ENCODE measurements at regions of chr5 and their contacts with region 1.

Region 1: DNA sequence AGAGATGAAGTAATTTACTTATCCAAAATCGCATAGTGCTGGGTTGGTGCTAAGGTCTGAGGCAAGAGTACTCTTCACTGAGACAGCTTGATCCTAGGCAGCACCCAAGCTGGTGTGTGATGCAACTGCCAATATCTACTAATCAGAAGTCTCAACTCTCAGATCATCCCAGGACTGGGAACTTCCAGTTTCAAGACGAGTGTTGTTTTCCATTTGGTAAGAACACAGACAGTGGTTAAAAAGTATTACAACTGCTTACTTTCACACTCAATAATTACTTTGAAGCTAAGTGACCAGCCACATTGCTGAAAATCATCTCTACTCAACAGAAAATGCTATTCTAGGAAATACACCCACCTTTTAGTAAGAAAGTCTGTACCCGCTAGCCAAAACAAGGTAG is 45.3 kb downstream of the FBXW11 start:
- DNase-seq: peak; percentile 65
- H3K4me3 Mint-ChIP-seq: no peak overlapping the region
- H3K27ac Mint-ChIP-seq: peak overlapping the region; percentile 57
- H3K4me1 Mint-ChIP-seq: peaks cover 89% of the 10 kb centered on the region
- H3K27me3 Mint-ChIP-seq: no peaks in the 10 kb centered on the region

Region 2: DNA sequence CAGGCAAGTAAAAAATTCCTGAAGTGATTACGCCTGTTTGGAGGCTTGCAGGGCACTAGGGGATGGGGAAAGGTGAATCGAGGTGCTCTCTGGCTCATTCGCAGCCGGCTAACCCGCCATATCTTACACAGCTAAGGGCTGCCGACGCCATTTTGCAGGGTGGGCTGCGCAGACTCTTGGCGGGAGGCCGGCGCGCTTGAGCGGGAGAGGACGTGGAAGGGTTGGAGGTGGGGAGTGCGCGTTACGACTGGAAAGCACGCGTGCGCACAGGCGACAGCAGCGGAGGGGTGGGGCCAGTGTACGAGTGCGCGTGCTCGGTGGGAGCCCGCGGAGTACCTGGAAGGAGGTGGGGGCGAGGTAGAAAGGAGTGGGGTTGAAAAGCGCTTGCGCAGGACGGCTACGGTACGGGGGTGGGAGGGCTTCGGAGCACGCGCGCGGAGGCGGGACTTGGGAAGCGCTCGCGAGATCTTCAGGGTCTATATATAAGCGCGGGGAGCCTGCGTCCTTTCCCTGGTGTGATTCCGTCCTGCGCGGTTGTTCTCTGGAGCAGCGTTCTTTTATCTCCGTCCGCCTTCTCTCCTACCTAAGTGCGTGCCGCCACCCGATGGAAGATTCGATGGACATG is 573.7 kb before region 1 on chr5 and contains the start of gene NPM1:
- CTCF ChIA-PET with region 1: no interaction called
- intact Hi-C with region 1: loop called (anchors 5 kb)
- DNase-seq: peak; percentile 98
- H3K4me3 Mint-ChIP-seq: peak within 1 kb of the TSS; percentile 98
- H3K27ac Mint-ChIP-seq: peak within 1 kb of the TSS; percentile 98
- H3K4me1 Mint-ChIP-seq: peaks cover 37% of the 10 kb centered on the region
- H3K27me3 Mint-ChIP-seq: no peaks in the 10 kb centered on the region
- total RNA-seq, gene NPM1: 3,194 to 3,467 TPM

Region 3: DNA sequence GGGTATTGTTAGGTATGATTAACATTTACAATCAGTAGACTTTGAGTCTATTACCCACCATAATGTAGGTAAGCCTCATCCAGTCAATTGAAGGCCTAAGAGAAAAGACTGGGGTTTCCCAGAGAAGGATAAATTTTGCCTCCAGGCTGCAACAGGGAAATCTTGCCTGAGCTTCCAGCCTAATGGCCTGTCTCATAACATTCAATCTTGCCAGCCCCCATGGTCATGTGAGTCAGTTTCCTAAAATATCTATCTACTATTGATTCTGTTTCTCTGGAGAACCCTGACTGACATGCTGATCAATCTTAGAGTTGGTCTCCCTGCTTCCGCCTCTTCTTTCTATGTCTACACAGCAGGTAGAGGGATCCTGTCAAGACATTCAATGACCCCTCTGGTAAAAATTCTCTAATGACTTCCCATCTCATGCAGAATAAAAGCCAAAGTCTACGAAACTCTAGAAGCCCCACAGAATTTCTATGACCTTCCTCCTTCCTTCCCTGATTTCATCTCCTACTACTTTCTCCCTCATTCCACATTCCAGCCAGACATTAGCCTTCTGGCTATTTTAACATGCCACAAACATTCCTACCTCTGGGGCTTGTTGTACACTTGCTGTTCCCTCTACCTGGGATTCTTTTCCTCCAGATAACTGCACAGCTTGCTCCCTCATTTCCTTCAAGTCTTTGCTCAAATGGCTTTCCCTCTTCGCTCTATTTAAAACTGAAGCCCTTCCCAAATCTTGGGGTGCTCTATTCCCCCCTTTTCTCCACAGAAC is 14.9 kb before region 1 on chr5:
- CTCF ChIA-PET with region 1: no interaction called
- intact Hi-C with region 1: no loop called
- DNase-seq: no peak
- H3K4me3 Mint-ChIP-seq: no peak overlapping the region
- H3K27ac Mint-ChIP-seq: no peak overlapping the region
- H3K4me1 Mint-ChIP-seq: peaks cover 36% of the 10 kb centered on the region
- H3K27me3 Mint-ChIP-seq: no peaks in the 10 kb centered on the region

Region 4: GRCh38 chr5:171978519-171978918 is 17.4 kb after region 1 on chr5:
- CTCF ChIA-PET with region 1: interaction called, 3 read pairs
- intact Hi-C with region 1: loop called (anchors 1 kb)
- DNase-seq: no peak
- H3K4me3 Mint-ChIP-seq: no peak overlapping the region
- H3K27ac Mint-ChIP-seq: peak overlapping the region; percentile 24
- H3K4me1 Mint-ChIP-seq: peaks cover 56% of the 10 kb centered on the region
- H3K27me3 Mint-ChIP-seq: no peaks in the 10 kb centered on the region

Region 5: GRCh38 chr5:172006321-172007174 is 45.4 kb after region 1 on chr5 and contains the start of gene FBXW11:
- CTCF ChIA-PET with region 1: interaction called, 5 read pairs
- intact Hi-C with region 1: loop called (anchors 1 kb)
- DNase-seq: peak; percentile 96
- H3K4me3 Mint-ChIP-seq: peak within 1 kb of the TSS; percentile 96
- H3K27ac Mint-ChIP-seq: peak within 1 kb of the TSS; percentile 99
- H3K4me1 Mint-ChIP-seq: peaks cover 46% of the 10 kb centered on the region
- H3K27me3 Mint-ChIP-seq: no peaks in the 10 kb centered on the region
- total RNA-seq, gene FBXW11: 32.8 to 35.5 TPM

Region 6: GRCh38 chr5:172114875-172115422 is 153.8 kb after region 1 on chr5:
- CTCF ChIA-PET with region 1: no interaction called
- intact Hi-C with region 1: loop called (anchors 1 kb)
- DNase-seq: peak; percentile 93
- H3K4me3 Mint-ChIP-seq: peak overlapping the region; percentile 86
- H3K27ac Mint-ChIP-seq: peak overlapping the region; percentile 94
- H3K4me1 Mint-ChIP-seq: peaks cover 69% of the 10 kb centered on the region
- H3K27me3 Mint-ChIP-seq: no peaks in the 10 kb centered on the region

Region 7: DNA sequence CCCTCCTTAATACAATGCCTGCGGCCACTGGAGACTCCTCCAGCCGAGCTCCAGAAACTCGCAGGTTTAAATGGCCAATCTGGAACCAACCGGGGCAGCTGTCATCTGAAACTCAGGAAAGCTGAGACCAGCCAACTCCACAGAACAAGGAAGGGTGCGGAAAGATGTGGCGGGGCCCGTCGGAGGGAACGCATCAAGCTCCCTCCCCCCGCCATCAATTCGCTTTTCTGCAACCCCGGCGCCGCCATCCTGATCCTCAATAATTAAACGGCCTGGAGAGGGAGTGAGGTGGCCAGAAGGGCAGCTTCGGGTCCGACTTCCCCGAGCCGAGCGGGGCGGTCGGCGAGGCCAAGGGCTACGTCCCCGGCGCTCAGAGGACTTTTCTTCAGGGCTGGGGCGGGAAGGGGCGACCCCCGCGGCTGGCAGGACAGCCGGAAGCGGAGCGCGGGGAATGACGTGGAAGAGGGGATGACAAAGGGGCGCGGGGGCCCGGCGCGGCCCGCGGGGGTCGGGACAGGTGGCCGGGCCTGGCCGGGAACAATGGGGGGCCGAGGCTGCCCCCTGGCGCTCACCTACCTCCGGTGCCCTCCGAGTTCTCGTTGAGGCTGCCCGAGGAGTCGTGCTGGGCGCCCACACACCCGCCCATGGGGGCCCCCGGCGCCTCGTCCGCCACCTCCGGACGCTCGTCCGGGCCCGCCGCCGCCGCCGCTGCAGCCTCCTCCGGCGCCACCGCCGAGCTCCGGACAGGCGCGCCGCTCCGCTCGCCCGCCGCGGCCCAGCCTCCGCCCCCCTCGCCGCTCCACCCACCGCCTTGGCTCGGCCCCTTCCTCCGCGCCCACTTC is 322.1 kb after region 1 on chr5 and contains the start of gene UBTD2:
- CTCF ChIA-PET with region 1: no interaction called
- intact Hi-C with region 1: loop called (anchors 5 kb)
- DNase-seq: peak; percentile 70
- H3K4me3 Mint-ChIP-seq: peak within 1 kb of the TSS; percentile 81
- H3K27ac Mint-ChIP-seq: no peak within 1 kb of the TSS
- H3K4me1 Mint-ChIP-seq: peaks cover 19% of the 10 kb centered on the region
- H3K27me3 Mint-ChIP-seq: no peaks in the 10 kb centered on the region
- total RNA-seq, gene UBTD2: 2.3 to 2.6 TPM

Measured in activated naive CD4-positive, alpha-beta T cell treated with anti-CD3 and anti-CD28 coated beads for 36 hours (primary cell).